Mammary epithelial cell (primary cell): ENCODE measurements at regions of chr2 and their contacts with region 1.

Region 1: DNA sequence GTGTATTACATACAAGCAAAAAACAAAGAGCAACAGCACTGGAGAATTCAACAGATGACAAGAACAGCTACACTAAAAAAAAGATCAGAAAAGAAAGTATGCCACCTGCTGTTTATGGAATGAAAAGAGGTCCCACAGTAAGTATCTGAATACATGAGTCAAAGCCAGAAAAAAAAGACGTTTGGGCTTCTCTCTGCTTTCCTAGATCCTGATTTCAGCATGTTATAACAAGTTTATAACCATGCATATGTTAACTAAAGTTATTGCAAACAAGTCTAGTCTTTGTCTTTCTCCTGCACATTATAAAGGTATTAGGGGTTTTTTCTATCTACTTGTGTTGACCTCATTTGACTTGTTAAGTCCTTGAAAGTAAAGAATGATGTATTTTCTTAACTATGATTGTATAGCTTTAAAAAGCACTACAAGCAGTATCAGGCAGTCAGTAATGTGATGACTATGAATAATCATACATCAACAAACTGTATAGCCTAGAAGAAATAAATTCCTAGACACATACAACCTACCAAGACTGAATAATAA is 108.5 kb upstream of the COL5A2 start:
- DNase-seq: peak; percentile 95
- H3K4me3 ChIP-seq: no peak overlapping the region
- H3K27ac ChIP-seq: peak overlapping the region; percentile 76
- H3K4me1 ChIP-seq: peaks cover 19% of the 10 kb centered on the region
- H3K27me3 ChIP-seq: no peaks in the 10 kb centered on the region
- CTCF ChIP-seq: peak; percentile 48 to 63

Region 2: DNA sequence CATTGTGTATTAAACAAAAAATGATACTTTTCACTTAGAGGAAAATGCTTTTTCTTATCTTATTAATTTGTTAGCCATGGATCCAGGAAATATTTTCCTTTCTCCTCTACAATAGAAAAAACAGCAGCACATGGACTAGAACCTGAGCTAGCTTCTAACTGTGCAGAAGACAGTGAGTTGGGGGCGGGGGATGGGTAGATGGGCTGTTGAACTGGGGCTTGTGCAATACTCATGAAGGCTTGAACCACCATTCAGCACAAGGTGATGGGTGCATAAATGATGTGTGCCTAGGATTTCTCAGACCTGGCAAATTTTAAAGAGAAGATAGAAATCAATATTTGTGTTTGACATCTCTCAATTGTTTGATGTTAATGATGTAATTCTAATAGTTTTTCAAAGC is 150.5 kb before region 1 on chr2:
- CTCF ChIA-PET with region 1: interaction called, 4 read pairs
- dilution Hi-C with region 1: no loop called
- in situ Hi-C with region 1: loop called (anchors 5 to 10 kb)
- intact Hi-C with region 1: no loop called
- DNase-seq: no peak
- H3K4me3 ChIP-seq: no peak overlapping the region
- H3K27ac ChIP-seq: no peak overlapping the region
- H3K4me1 ChIP-seq: no peaks in the 10 kb centered on the region
- H3K27me3 ChIP-seq: no peaks in the 10 kb centered on the region
- CTCF ChIP-seq: no peak

Region 3: GRCh38 chr2:189204322-189204941 is 83.6 kb before region 1 on chr2:
- CTCF ChIA-PET with region 1: no interaction called
- dilution Hi-C with region 1: no loop called
- in situ Hi-C with region 1: no loop called
- intact Hi-C with region 1: loop called (anchors 5 kb)
- DNase-seq: peak; percentile 41
- H3K4me3 ChIP-seq: peak overlapping the region in 1 of 3 experiments; percentile 3
- H3K27ac ChIP-seq: peak overlapping the region; percentile 19
- H3K4me1 ChIP-seq: peaks cover 10% of the 10 kb centered on the region
- H3K27me3 ChIP-seq: no peaks in the 10 kb centered on the region
- CTCF ChIP-seq: no peak

Region 4: DNA sequence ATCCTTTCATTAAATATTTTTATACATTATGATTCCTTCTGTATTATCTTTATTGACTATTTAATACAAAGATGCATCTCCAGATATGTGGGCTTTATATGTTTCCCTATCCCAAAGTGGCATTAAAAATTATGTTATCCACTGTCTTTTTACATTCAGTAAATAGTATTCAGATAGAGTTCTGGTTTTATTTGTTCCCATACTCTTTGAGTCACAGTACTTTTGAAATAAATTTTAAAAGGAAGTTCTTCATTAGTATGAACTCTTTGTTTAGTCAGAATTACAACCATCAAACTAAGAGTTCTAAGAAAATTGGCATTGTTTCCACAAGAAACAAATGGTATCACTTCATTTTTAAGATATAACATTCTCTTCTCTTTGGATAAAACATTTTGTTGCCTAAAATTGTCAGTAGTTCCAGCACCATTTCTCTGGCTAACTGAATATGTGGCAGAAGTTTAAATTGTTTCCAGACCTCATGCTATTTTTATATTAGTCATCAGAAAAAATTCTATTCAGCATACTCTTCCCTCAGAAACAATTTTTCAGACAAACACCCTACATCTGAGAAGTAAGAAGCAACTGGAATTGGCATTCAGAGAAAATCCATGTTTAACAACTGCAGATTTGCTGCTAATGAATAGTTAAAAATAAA is 20.0 kb before region 1 on chr2:
- CTCF ChIA-PET with region 1: no interaction called
- dilution Hi-C with region 1: no loop called
- in situ Hi-C with region 1: no loop called
- intact Hi-C with region 1: no loop called
- DNase-seq: no peak
- H3K4me3 ChIP-seq: no peak overlapping the region
- H3K27ac ChIP-seq: no peak overlapping the region
- H3K4me1 ChIP-seq: peaks cover 3% of the 10 kb centered on the region
- H3K27me3 ChIP-seq: no peaks in the 10 kb centered on the region
- CTCF ChIP-seq: no peak

Region 5: GRCh38 chr2:189347540-189347939 is 59.5 kb after region 1 on chr2:
- CTCF ChIA-PET with region 1: no interaction called
- dilution Hi-C with region 1: no loop called
- in situ Hi-C with region 1: no loop called
- intact Hi-C with region 1: loop called (anchors 1 kb)
- DNase-seq: peak; percentile 80
- H3K4me3 ChIP-seq: no peak overlapping the region
- H3K27ac ChIP-seq: peak overlapping the region; percentile 67
- H3K4me1 ChIP-seq: peaks cover 11% of the 10 kb centered on the region
- H3K27me3 ChIP-seq: no peaks in the 10 kb centered on the region
- CTCF ChIP-seq: peak in 1 of 2 donors; percentile 47

Region 6: DNA sequence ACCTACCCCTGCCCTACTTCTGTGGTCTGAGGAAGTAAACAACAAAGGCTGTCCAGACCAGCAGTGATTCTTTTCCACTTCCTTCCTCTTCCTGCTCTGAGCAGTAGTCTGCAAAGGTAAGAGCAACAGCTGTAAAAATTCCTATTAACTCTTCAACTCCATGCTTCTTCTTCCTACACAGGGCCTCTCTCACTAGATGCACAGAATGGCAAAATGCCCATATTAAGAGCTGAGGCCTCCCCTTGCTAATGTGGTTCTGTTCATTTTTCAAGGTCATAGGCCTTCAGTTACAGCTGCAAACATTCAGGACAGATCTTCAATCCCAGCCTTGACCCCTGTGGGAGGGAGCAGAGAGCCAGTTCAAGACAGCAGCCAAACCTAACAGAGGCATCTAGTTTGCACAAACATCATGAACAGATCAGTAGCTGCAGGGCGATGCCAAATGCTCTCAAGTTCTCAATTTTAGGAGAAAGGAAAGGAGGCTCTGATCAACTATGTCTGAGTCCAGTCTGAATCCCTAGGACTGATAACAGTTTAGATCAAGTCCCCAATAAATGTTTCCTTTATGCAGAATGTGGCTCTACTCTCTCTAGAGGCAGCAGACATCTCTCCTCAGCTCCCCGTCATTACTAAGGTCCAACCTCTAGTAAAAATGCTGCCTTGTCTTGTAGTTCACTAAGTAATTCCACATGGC is 271.7 kb after region 1 on chr2:
- CTCF ChIA-PET with region 1: no interaction called
- dilution Hi-C with region 1: no loop called
- in situ Hi-C with region 1: no loop called
- intact Hi-C with region 1: no loop called
- DNase-seq: no peak
- H3K4me3 ChIP-seq: no peak overlapping the region
- H3K27ac ChIP-seq: no peak overlapping the region
- H3K4me1 ChIP-seq: no peaks in the 10 kb centered on the region
- H3K27me3 ChIP-seq: no peaks in the 10 kb centered on the region
- CTCF ChIP-seq: no peak